Dorsolateral prefrontal cortex (tissue), 120 donors: ENCODE measurements at regions of chr21 and their contacts with region 1.

Region 1: DNA sequence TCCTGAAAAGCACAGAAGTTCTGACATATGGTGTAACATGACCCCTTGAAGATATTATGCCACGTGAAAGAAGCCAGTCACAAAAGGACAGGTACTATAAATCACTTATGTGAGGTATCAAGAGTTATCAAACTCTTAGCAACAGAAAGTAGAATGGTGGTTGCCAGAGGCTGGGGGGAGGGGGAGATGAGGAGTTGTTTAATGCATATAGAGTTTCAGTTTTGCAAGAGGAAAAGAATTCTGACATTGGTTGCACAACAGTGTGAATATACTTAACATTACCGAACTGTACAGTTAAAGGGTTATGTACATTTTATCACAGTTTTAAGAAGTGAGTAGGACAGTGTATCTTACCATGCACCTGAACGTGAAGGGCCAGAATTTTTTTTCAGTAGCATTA is 80.0 kb downstream of the USP25 start:
- DNase-seq: no peak
- H3K4me3 ChIP-seq: no peak overlapping the region
- H3K27ac ChIP-seq: no peak overlapping the region
- H3K27me3 ChIP-seq: no peaks in the 10 kb centered on the region
- CTCF ChIP-seq: no peak

Region 2: GRCh38 chr21:14864211-14865021 is 945.4 kb before region 1 on chr21:
- intact Hi-C with region 1: no loop called
- DNase-seq: peak; percentile 60 to 86 (median 80)
- H3K4me3 ChIP-seq: peak overlapping the region in 4 of 59 donors; percentile 5 to 32 (median 18)
- H3K27ac ChIP-seq: peak overlapping the region in 57 of 59 donors; percentile 20 to 91 (median 76)
- H3K27me3 ChIP-seq: no peaks in the 10 kb centered on the region
- CTCF ChIP-seq: peak in 54 of 56 donors; percentile 37 to 85 (median 68)

Region 3: DNA sequence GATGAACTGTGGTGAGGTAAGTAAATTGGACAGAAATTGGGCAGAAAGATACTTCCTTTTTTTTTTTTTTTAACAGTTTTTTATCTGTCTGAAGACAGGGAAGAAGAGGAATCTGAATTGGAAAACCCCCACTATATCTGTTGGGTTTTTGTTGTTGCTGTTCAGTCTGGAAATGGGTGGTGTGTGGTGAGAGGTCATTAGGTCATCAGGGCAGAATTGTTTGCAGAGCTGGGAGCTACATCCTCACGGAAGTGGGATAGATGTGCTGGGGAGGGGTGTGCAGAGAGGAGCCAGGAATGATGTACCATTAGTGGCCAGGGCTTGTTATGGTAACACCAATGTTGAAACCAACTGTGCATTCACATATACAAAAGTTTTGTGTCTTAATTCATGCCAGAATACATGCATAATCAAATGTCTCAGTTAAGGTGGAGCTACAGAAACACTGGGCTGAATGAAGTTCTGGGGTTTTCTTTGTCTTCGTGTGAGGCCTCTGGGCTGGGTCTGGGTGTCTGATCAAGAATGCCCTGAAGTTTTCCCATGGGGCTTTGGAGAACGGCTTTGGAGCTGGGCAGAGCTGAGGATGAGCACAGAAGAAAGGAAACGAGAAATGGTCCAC is 67.7 kb before region 1 on chr21:
- intact Hi-C with region 1: loop called in 1 of 2 experiments (anchors 10 kb)
- DNase-seq: no peak
- H3K4me3 ChIP-seq: no peak overlapping the region
- H3K27ac ChIP-seq: peak overlapping the region in 5 of 59 donors; percentile 13 to 25 (median 19)
- H3K27me3 ChIP-seq: no peaks in the 10 kb centered on the region
- CTCF ChIP-seq: no peak

Region 4: GRCh38 chr21:15761507-15762100 is 48.2 kb before region 1 on chr21:
- intact Hi-C with region 1: loop called in 1 of 2 experiments (anchors 10 kb)
- DNase-seq: no peak
- H3K4me3 ChIP-seq: no peak overlapping the region
- H3K27ac ChIP-seq: no peak overlapping the region
- H3K27me3 ChIP-seq: no peaks in the 10 kb centered on the region
- CTCF ChIP-seq: no peak

Region 5: DNA sequence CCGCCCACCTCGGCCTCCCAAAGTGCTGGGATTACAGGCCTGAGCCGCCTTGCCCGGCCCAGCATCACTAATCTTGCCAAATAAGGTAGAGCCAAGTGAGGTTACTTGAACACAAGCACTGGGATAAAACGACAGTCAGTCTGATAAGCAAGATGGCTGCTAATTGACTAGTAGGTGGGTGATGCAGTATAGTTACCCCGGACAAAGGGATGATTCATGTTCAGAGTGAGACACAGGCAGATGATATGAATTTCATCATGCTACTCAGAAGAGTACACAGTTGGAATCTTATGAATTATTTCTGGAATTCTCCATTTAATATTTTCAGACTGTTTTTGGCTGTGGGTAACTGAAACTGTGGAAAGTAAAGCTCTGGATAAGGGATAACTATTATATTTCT is 98.4 kb after region 1 on chr21:
- intact Hi-C with region 1: no loop called
- DNase-seq: no peak
- H3K4me3 ChIP-seq: no peak overlapping the region
- H3K27ac ChIP-seq: no peak overlapping the region
- H3K27me3 ChIP-seq: no peaks in the 10 kb centered on the region
- CTCF ChIP-seq: no peak